ENCODE measurements at regions of chr4 and their contacts with region 1.

Region 1: GRCh38 chr4:88456757-88457306 is at the start of gene HERC5:
- DNase-seq: peak; percentile 92
- H3K4me3 Mint-ChIP-seq: peak within 1 kb of the TSS; percentile 99
- H3K27ac Mint-ChIP-seq: peak within 1 kb of the TSS; percentile 100
- H3K4me1 Mint-ChIP-seq: peaks cover 47% of the 10 kb centered on the region
- H3K27me3 Mint-ChIP-seq: no peaks in the 10 kb centered on the region
- total RNA-seq, gene HERC5: 19.1 and 21.2 TPM in 2 replicates

Region 2: GRCh38 chr4:86934771-86935565 is 1521.9 kb before region 1 on chr4 and contains the start of gene AFF1:
- intact Hi-C with region 1: loop called (anchors 5 kb)
- DNase-seq: peak; percentile 86
- H3K4me3 Mint-ChIP-seq: peak within 1 kb of the TSS; percentile 89
- H3K27ac Mint-ChIP-seq: peak within 1 kb of the TSS; percentile 97
- H3K4me1 Mint-ChIP-seq: peaks cover 48% of the 10 kb centered on the region
- H3K27me3 Mint-ChIP-seq: no peaks in the 10 kb centered on the region
- total RNA-seq, gene AFF1: 44.7 and 47.0 TPM in 2 replicates

Region 3: DNA sequence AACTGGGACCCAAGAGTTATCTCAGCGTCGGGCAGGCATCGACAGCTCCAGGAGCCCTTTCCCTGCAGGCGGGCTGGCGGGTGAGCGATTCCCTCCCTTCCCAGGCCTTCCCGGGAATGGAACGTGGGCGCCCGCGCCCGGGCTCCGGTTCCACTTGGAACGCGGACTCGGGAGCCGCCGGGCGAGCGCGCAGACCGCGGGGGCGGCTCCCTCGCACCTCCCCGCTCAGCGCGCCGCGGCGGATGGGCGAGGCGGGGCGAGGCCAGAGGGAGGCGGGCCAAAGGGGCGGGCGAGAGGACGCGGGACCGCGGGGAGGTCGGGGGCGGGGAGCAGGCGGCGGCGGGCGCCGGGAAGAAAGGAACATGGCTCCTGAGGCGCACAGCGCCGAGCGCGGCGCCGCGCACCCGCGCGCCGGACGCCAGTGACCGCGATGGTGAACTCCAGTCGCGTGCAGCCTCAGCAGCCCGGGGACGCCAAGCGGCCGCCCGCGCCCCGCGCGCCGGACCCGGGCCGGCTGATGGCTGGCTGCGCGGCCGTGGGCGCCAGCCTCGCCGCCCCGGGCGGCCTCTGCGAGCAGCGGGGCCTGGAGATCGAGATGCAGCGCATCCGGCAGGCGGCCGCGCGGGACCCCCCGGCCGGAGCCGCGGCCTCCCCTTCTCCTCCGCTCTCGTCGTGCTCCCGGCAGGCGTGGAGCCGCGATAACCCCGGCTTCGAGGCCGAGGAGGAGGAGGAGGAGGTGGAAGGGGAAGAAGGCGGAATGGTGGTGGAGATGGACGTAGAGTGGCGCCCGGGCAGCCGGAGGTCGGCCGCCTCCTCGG is 449.3 kb before region 1 on chr4 and contains the start of gene PKD2:
- intact Hi-C with region 1: loop called (anchors 2 kb)
- DNase-seq: peak; percentile 79
- H3K4me3 Mint-ChIP-seq: peak within 1 kb of the TSS; percentile 89
- H3K27ac Mint-ChIP-seq: peak within 1 kb of the TSS; percentile 80
- H3K4me1 Mint-ChIP-seq: peaks cover 41% of the 10 kb centered on the region
- H3K27me3 Mint-ChIP-seq: peaks cover 20% of the 10 kb centered on the region
- total RNA-seq, gene PKD2: 10.1 and 11.7 TPM in 2 replicates

Region 4: GRCh38 chr4:88284439-88285234 is 172.2 kb before region 1 on chr4 and contains the start of gene PPM1K:
- intact Hi-C with region 1: loop called (anchors 1 kb)
- DNase-seq: peak; percentile 99
- H3K4me3 Mint-ChIP-seq: peak within 1 kb of the TSS; percentile 99
- H3K27ac Mint-ChIP-seq: peak within 1 kb of the TSS; percentile 99
- H3K4me1 Mint-ChIP-seq: peaks cover 47% of the 10 kb centered on the region
- H3K27me3 Mint-ChIP-seq: no peaks in the 10 kb centered on the region
- total RNA-seq, gene PPM1K: 37.3 and 39.5 TPM in 2 replicates

Region 5: DNA sequence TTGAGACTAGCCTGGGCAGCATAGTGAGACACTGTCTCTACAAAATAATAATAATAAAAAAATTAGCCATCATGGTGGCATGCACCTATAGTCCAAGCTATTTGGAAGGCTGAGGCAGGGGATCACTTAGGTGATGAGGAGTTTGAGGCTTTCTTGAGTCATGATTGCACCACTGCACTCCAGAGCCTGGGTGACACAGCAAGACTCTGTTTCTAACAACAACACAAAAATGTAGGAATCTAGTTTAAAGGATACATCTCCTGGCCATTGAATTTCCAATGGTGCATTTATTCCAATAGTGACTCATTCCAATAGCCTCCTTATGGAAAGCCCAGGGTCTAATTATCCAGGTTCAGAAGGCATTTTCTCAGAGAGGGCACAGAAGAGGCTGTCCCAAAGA is 100.1 kb before region 1 on chr4:
- intact Hi-C with region 1: no loop called
- DNase-seq: no peak
- H3K4me3 Mint-ChIP-seq: no peak overlapping the region
- H3K27ac Mint-ChIP-seq: no peak overlapping the region
- H3K4me1 Mint-ChIP-seq: no peaks in the 10 kb centered on the region
- H3K27me3 Mint-ChIP-seq: no peaks in the 10 kb centered on the region

Region 6: DNA sequence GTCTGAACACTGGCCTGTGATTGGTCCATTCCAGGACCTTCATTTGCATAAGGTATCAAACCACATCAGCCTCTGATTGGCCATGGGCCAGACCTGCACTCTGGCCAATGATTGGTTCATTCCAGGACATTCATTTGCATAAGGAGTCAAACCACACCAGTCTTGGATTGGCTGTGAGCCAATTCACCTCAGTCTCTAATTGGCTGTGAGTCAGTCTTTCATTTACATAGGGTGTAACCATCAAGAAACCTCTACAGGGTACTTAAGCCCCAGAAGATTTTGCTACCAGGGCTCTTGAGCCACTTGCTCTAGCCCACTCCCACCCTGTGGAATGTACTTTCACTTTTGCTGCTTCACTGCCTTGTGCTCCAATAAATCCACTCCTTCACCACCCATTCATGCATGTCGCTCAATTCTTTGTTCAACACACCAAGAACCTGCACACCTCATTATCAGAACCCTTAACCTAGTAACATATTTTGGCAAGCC is 14.1 kb before region 1 on chr4:
- intact Hi-C with region 1: no loop called
- DNase-seq: no peak
- H3K4me3 Mint-ChIP-seq: no peak overlapping the region
- H3K27ac Mint-ChIP-seq: no peak overlapping the region
- H3K4me1 Mint-ChIP-seq: peaks cover 24% of the 10 kb centered on the region
- H3K27me3 Mint-ChIP-seq: no peaks in the 10 kb centered on the region

Region 7: DNA sequence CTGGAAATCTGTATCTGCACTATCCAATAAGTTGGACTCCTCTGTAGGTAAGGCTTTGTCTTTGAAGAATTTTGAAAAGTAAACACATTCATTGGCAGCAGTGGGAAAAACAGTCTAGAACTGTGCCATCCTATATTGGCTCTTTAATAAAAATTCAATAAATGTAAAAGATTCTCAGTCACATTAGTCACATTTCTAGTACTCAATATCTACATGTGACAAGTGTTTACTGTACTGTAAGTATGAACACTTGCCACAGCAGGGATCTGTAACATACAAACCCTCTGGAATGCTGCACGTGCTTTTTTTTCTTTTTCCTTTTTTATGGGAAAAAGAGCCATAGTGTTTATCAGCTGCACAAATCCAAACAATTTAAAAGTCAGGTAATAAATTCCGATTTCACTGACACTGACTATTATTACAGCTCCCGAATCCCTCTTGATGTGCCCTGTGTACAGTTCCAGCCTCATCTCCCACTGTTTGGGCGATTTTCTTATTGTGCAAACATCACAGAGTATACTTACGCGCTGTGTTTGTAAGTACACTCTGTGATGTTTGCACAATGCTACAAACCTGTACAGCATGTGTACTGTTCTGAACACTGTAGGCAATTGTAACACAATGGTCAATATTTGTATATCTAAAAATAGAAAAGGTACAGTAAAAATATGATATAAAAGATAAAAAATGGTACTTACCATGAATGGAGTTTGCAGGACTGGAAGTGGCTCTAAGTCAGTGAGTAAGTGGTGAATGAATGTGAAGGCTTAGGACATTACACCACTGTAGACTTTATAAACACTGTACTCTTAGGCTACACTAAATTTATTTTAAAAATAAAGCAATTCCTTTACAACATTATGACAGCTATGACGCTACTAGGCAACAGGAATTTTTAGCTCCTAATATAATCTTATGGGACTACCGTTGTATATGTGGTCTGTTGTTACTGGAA is 58.0 kb after region 1 on chr4:
- intact Hi-C with region 1: loop called (anchors 2 kb)
- DNase-seq: no peak
- H3K4me3 Mint-ChIP-seq: no peak overlapping the region
- H3K27ac Mint-ChIP-seq: no peak overlapping the region
- H3K4me1 Mint-ChIP-seq: no peaks in the 10 kb centered on the region
- H3K27me3 Mint-ChIP-seq: no peaks in the 10 kb centered on the region

Region 8: GRCh38 chr4:88613417-88613875 is 156.6 kb after region 1 on chr4:
- intact Hi-C with region 1: loop called (anchors 5 kb)
- DNase-seq: peak; percentile 20
- H3K4me3 Mint-ChIP-seq: peak overlapping the region; percentile 55
- H3K27ac Mint-ChIP-seq: peak overlapping the region; percentile 77
- H3K4me1 Mint-ChIP-seq: peaks cover 61% of the 10 kb centered on the region
- H3K27me3 Mint-ChIP-seq: no peaks in the 10 kb centered on the region

Region 9: GRCh38 chr4:89110986-89111832 is 654.4 kb after region 1 on chr4 and contains the start of gene TIGD2:
- intact Hi-C with region 1: loop called (anchors 2 kb)
- DNase-seq: peak; percentile 80
- H3K4me3 Mint-ChIP-seq: peak within 1 kb of the TSS; percentile 86
- H3K27ac Mint-ChIP-seq: peak within 1 kb of the TSS; percentile 71
- H3K4me1 Mint-ChIP-seq: peaks cover 27% of the 10 kb centered on the region
- H3K27me3 Mint-ChIP-seq: peaks cover 20% of the 10 kb centered on the region
- total RNA-seq, gene TIGD2: 2.0 and 2.3 TPM in 2 replicates